ENCODE measurements at regions of chr9 and their contacts with region 1.

Region 1: GRCh38 chr9:121545875-121546423 is 46.3 kb upstream of the GGTA1 start:
- DNase-seq: peak; percentile 46
- H3K4me3 Mint-ChIP-seq: no peak overlapping the region
- H3K27ac Mint-ChIP-seq: no peak overlapping the region
- H3K4me1 Mint-ChIP-seq: no peaks in the 10 kb centered on the region
- H3K27me3 Mint-ChIP-seq: peaks cover 1% of the 10 kb centered on the region

Region 2: DNA sequence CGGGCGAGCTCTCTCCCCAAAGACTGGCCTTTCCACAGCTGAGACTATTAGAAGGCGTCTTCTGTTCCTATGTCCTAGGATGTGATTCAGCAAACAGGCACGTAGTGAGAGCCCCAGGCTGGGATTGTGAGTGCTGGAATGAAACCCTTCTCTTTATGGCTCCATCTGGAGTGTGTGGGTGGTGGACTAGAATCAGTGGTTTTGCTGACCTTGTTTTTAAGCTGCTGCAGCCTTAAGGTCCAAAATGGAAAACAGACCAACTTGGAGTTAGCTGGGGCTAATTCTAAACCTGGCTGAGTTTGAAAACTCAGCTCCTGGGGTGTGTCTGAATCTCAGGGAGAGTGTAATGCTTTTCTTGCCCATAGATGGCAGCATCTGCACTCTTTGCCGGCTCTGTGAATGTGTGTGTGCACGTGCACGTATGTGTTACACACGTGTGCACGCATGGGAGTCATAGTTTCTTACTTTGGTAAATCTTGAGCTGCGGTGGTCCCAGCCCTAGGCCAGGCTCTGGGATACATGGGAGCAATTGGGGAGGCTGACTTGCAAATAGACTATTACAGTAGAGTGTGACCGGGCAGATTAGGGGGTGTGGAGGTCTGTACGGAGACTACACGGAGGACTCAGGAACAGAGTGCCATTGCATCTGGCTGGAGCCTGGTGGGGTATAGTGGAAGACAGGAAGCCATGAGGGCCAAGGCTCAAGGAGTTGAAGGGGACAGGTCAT is 267.3 kb before region 1 on chr9:
- intact Hi-C with region 1: no loop called
- DNase-seq: peak; percentile 17
- H3K4me3 Mint-ChIP-seq: no peak overlapping the region
- H3K27ac Mint-ChIP-seq: no peak overlapping the region
- H3K4me1 Mint-ChIP-seq: peaks cover 6% of the 10 kb centered on the region
- H3K27me3 Mint-ChIP-seq: peaks cover 3% of the 10 kb centered on the region

Region 3: DNA sequence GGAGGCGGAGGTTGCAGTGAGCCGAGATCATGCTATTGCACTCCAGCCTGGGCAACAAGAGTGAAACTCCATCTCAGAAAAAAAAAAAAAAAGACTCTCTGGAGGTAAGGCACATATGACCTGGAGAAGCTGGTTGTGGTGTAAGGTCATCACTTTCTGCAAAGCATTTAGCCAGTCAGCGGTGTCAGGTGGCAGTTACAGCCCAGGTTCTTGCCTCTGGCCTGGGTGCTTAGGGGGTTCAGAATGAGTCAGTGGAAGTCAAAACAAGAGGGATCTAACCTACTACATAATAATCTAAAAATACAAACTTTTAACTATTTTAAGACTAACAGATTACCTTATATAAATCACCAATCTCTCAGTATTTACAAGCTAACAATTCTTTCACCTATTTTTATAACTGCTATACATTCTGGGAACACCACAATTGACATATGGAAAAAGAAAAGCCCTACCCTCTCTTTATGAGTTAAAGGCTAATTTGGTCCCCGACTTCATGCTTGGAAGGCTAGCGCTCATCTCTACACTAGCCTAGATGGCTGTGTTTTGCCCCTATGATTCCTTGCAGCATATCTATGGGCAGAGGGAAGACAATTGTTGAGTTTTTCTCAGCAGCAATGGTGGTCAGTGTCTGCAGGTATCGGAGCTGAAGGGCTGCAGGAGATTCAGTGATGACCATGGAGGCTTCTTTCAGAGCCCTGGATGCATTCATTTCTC is 205.1 kb before region 1 on chr9:
- intact Hi-C with region 1: no loop called
- DNase-seq: no peak
- H3K4me3 Mint-ChIP-seq: no peak overlapping the region
- H3K27ac Mint-ChIP-seq: no peak overlapping the region
- H3K4me1 Mint-ChIP-seq: peaks cover 25% of the 10 kb centered on the region
- H3K27me3 Mint-ChIP-seq: no peaks in the 10 kb centered on the region

Region 4: DNA sequence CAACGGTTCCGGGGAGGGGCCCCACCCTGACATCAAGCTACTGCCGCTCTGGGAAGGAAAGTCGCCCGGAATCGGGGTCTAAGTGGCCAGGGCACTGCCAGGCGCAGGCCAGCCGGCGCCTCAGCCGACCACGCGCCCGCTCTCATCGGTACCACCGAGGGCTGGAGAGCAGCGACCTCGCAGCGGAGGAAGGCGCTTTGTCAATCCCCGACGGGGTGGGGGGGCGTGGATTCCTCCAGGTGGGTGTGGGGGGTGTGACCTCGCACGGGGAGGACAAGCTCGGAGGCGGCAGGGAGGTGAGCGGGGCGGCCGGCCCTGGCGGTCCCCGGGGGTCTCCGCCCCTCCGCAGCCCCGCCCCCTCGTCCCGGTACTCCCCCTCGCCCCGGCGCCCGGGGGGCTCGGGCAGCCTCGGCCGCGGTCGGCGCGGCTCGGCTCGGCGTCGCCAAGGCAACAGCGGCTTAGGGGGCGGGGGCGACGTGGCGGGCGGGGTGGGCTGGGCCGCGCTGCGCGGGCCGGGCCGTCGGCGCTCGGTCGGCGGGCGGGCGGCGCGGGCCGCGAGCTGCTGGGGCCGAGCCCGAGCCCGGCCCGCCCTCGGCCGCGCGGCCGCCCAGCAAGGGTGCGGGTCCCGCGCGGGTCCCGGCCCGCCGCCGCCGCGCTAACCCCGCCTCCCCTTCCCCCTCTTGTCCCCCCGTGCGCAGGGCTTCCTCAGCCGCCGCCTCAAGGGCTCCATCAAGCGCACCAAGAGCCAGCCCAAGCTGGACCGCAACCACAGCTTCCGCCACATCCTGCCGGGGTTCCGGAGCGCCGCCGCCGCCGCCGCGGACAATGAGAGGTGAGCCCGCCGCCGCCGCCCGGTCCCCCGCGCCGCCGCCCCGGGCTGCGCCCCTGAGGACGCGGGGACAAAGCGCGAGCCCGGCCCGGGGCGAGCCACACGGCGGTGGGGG is 152.9 kb after region 1 on chr9:
- intact Hi-C with region 1: loop called (anchors 5 kb)
- DNase-seq: peak; percentile 58
- H3K4me3 Mint-ChIP-seq: no peak overlapping the region
- H3K27ac Mint-ChIP-seq: no peak overlapping the region
- H3K4me1 Mint-ChIP-seq: peaks cover 6% of the 10 kb centered on the region
- H3K27me3 Mint-ChIP-seq: peaks cover 54% of the 10 kb centered on the region

Region 5: GRCh38 chr9:121744002-121744686 is 198.2 kb after region 1 on chr9:
- intact Hi-C with region 1: loop called (anchors 10 kb)
- DNase-seq: peak; percentile 45
- H3K4me3 Mint-ChIP-seq: no peak overlapping the region
- H3K27ac Mint-ChIP-seq: no peak overlapping the region
- H3K4me1 Mint-ChIP-seq: peaks cover 13% of the 10 kb centered on the region
- H3K27me3 Mint-ChIP-seq: peaks cover 6% of the 10 kb centered on the region